ENCODE measurements at regions of chr6 and their contacts with region 1.

Region 1: GRCh38 chr6:12637960-12638641 is 78.5 kb upstream of the PHACTR1 start:
- DNase-seq: peak; percentile 78

Region 2: GRCh38 chr6:12890171-12890790 is 252.2 kb after region 1 on chr6:
- intact Hi-C with region 1: loop called (anchors 10 kb)
- DNase-seq: no peak